H1 (cell line): ENCODE measurements at regions of chr16 and their contacts with region 1.

Region 1: DNA sequence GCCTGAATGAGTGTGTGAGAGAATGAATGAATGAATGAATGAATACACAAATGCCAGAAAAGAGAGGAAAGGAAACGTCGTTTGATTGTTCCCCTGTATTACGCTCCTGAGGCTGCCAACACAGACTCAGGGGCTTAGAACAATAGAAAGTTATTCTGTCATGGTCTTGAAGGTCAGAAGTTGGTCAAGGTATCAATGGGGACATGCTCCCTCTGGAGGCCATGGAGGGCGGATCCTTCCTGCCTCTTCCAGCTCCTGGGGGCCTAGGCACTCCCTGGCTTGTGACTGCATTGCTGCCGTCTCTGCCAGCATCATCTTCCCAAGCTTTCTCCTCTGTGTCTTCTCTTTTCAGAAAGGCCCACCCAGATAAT is 1.5 kb upstream of the SLC38A8 start:
- DNase-seq: peak in 1 of 2 experiments; percentile 19
- H3K4me3 ChIP-seq: no peak overlapping the region
- H3K27ac ChIP-seq: no peak overlapping the region
- H3K4me1 ChIP-seq: peaks cover 0 to 12% (median 9%) of the 10 kb centered on the region in 4 experiments; a peak in 6 of 7 replicates
- H3K27me3 ChIP-seq: no peaks in the 10 kb centered on the region; a peak in 1 of 7 replicates
- CTCF ChIP-seq: peak; percentile 61 to 76 (median 76)
- EP300 ChIP-seq: no peak
- POLR2A ChIP-seq: no peak
- RAD21 ChIP-seq: peak; percentile 66 to 69

Region 2: DNA sequence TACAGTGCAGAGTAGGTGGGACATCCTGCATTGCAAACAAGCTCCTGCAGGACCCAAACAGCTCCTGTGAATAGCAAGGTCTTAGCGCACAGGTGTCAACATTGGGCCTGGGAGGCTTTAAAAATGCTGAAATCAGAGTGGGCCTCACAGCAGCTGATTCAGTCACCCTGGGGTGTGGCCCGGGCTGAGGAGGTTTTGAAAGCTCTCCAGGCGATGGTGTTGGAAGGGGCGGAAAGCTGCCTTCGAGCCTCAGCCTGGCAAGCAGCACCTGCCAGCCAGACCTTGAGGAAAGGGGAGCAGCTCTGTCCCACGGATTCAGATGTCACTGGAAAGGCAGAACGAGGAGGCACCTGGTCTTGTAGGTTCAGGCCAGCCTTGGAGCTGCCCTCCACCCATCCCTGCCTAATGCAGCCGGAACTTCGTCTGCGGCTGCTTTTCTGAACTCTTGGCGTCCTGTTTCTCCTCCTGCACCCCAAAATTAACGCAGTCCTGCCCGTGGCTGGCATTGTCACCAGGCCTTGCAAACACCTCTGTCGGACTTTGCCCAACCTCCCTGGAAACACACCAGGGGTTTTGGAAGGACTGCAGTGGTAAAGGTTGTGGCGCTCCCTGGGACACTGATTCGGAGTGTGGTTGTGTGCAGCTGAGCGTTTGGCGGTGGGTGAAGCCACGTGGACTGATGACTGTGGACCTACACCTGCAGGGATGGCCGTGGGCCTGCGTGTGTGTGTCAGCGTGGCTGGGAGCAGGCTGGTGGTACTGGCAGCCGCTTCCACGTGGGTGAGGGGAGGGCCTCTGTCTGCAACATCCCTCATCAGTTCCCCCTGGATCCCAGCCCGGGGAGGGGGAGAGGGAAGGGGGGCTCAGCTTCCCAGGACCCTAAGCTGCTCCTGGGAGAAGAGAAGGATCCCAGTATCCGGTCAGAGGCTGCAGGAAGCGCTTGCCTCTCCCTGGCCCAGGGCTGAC is 72.7 kb before region 1 on chr16:
- CTCF ChIA-PET with region 1: interaction called, 267 read pairs
- POLR2A ChIA-PET with region 1: interaction called, 10 read pairs
- DNase-seq: no peak
- H3K4me3 ChIP-seq: no peak overlapping the region
- H3K27ac ChIP-seq: no peak overlapping the region
- H3K4me1 ChIP-seq: peaks cover 0 to 11% (median 8%) of the 10 kb centered on the region in 4 experiments; a peak in 6 of 7 replicates
- H3K27me3 ChIP-seq: peaks cover 0 to 13% (median 9%) of the 10 kb centered on the region in 4 experiments; a peak in 6 of 7 replicates
- CTCF ChIP-seq: no peak
- EP300 ChIP-seq: no peak
- POLR2A ChIP-seq: no peak
- RAD21 ChIP-seq: no peak

Region 3: DNA sequence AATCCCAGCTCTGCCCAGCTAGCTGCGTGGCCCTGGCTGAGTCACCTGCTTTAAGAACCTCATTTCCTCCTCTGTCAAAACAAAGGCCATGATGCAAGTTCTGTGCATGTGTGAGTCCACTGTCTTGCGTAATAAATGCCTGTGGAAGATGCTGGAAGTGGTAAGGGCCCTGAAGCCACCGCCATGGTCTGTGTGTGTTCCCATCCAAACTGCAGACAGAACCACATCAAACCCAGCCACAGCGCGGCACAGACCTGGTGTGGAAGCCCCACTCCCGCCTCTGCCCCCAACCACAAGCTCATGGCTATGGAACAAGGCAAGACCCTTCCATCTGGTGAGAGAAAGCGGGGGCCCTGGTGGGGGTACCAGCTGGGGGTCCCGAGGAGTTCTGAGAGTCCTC is 50.0 kb before region 1 on chr16:
- CTCF ChIA-PET with region 1: interaction called, 20 read pairs
- POLR2A ChIA-PET with region 1: no interaction called
- DNase-seq: no peak
- H3K4me3 ChIP-seq: no peak overlapping the region
- H3K27ac ChIP-seq: no peak overlapping the region
- H3K4me1 ChIP-seq: peaks cover 2 to 12% (median 7%) of the 10 kb centered on the region in 4 experiments; a peak in 5 of 7 replicates
- H3K27me3 ChIP-seq: no peaks in the 10 kb centered on the region
- CTCF ChIP-seq: no peak
- EP300 ChIP-seq: no peak
- POLR2A ChIP-seq: no peak
- RAD21 ChIP-seq: no peak

Region 4: GRCh38 chr16:84013787-84014569 is 30.1 kb before region 1 on chr16:
- CTCF ChIA-PET with region 1: interaction called, 12 read pairs
- POLR2A ChIA-PET with region 1: no interaction called
- DNase-seq: peak; percentile 99 to 100
- H3K4me3 ChIP-seq: no peak overlapping the region
- H3K27ac ChIP-seq: no peak overlapping the region
- H3K4me1 ChIP-seq: no peaks in the 10 kb centered on the region; a peak in 1 of 7 replicates
- H3K27me3 ChIP-seq: no peaks in the 10 kb centered on the region
- CTCF ChIP-seq: no peak
- EP300 ChIP-seq: no peak
- POLR2A ChIP-seq: 0 out of 3 replicates have a peak, but pooled peaks of 1 of the 2 experiments have one; percentile 26
- RAD21 ChIP-seq: no peak

Region 5: DNA sequence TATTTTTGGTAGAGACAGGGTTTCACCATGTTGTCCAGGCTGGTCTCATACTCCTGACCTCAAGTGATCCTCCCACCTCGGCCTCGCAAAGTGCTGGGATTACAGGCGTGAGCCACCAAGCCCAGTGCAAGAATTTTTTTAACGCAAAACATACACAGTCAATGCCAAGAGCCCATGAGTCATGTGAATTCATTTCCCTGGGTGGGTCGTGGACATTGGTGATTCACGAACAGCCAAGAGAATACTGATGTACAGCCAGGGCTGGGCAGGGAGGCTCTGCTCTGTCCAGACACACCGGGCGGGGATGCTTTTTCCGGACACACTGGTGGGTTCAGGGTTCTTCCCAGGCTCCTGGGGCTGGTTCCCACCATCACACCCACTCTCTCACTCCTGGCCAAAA is 19.2 kb before region 1 on chr16:
- CTCF ChIA-PET with region 1: interaction called, 31 read pairs
- POLR2A ChIA-PET with region 1: no interaction called
- DNase-seq: no peak
- H3K4me3 ChIP-seq: no peak overlapping the region
- H3K27ac ChIP-seq: no peak overlapping the region
- H3K4me1 ChIP-seq: peaks cover 0 to 4% (median 0%) of the 10 kb centered on the region in 4 experiments; a peak in 2 of 7 replicates
- H3K27me3 ChIP-seq: no peaks in the 10 kb centered on the region
- CTCF ChIP-seq: no peak
- EP300 ChIP-seq: no peak
- POLR2A ChIP-seq: no peak
- RAD21 ChIP-seq: no peak

Region 6: DNA sequence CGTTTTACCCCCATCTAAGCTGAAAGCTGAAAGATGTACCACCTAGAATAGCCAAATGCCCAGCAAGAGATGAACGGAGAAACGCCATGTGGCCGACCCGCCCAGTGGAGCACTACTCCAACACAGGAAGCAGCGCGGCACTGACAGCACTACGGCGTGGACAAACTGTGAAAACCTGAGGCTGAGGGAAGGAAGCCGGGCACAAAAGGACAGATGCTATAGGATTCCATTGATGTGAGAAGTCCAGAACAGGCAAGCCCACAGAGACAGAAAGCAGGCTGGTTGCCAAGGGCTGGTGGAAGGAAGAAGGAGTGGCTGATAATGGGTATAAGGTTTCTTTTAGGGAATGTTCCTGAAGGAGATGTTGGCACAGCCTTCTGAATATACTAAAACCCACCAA is 27.9 kb after region 1 on chr16:
- CTCF ChIA-PET with region 1: interaction called, 27 read pairs
- POLR2A ChIA-PET with region 1: no interaction called
- DNase-seq: no peak
- H3K4me3 ChIP-seq: no peak overlapping the region
- H3K27ac ChIP-seq: no peak overlapping the region
- H3K4me1 ChIP-seq: no peaks in the 10 kb centered on the region
- H3K27me3 ChIP-seq: no peaks in the 10 kb centered on the region
- CTCF ChIP-seq: no peak
- EP300 ChIP-seq: no peak
- POLR2A ChIP-seq: no peak
- RAD21 ChIP-seq: no peak

Region 7: GRCh38 chr16:84207251-84207650 is 163.1 kb after region 1 on chr16:
- CTCF ChIA-PET with region 1: no interaction called
- POLR2A ChIA-PET with region 1: no interaction called
- DNase-seq: no peak
- H3K4me3 ChIP-seq: no peak overlapping the region
- H3K27ac ChIP-seq: no peak overlapping the region
- H3K4me1 ChIP-seq: peaks cover 0 to 3% (median 0%) of the 10 kb centered on the region in 4 experiments; a peak in 1 of 7 replicates
- H3K27me3 ChIP-seq: no peaks in the 10 kb centered on the region
- CTCF ChIP-seq: no peak
- EP300 ChIP-seq: no peak
- POLR2A ChIP-seq: no peak
- RAD21 ChIP-seq: no peak